Heart right ventricle (tissue), 16 donors: ENCODE measurements at regions of chr7 and their contacts with region 1.

Region 1: GRCh38 chr7:151315038-151315655 is 26.5 kb upstream of the NUB1 start:
- DNase-seq: peak in 1 of 2 donors; percentile 79
- ATAC-seq: peak in 7 of 8 donors; percentile 53 to 89 (median 78)
- H3K4me3 ChIP-seq: no peak overlapping the region
- H3K27ac ChIP-seq: no peak overlapping the region
- H3K4me1 ChIP-seq: peaks cover 0 to 12% (median 3%) of the 10 kb centered on the region in 9 donors
- H3K27me3 ChIP-seq: no peaks in the 10 kb centered on the region
- CTCF ChIP-seq: peak; percentile 62 to 92 (median 84)

Region 2: GRCh38 chr7:151125470-151125845 is 189.7 kb before region 1 on chr7:
- intact Hi-C with region 1: no loop called
- DNase-seq: peak; percentile 50 to 66
- ATAC-seq: peak; percentile 41 to 71 (median 60)
- H3K4me3 ChIP-seq: peak overlapping the region in 9 of 10 donors; percentile 23 to 65 (median 59)
- H3K27ac ChIP-seq: peak overlapping the region in 5 of 10 donors; percentile 38 to 58 (median 55)
- H3K4me1 ChIP-seq: peaks cover 3 to 28% (median 15%) of the 10 kb centered on the region in 9 donors
- H3K27me3 ChIP-seq: no peaks in the 10 kb centered on the region
- CTCF ChIP-seq: peak in 7 of 9 donors; percentile 4 to 52 (median 40)

Region 3: DNA sequence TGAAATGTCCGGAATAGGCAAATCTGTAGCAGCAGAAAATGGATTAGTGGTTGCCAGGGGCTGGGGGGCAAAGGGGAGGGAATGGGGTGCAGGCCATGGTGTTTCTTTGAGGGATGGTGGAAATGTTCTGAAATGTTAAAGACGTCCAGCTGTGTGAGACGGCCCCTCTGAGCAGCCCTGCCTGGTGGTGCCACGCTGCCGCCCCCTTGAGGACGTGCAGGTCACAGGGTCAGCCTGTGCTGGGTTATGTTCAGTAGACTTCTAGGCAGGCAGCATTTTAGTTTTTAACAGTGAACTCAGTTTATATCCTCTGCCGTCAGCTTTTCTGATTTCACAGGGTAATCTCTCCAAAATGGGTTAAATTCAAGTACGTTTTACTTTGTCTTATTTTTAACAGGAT is 35.9 kb after region 1 on chr7:
- intact Hi-C with region 1: loop called (anchors 1 to 5 kb)
- DNase-seq: no peak
- ATAC-seq: peak in 1 of 8 donors; percentile 35
- H3K4me3 ChIP-seq: no peak overlapping the region
- H3K27ac ChIP-seq: peak overlapping the region in 1 of 10 donors; percentile 90
- H3K4me1 ChIP-seq: peaks cover 0 to 44% (median 20%) of the 10 kb centered on the region in 9 donors
- H3K27me3 ChIP-seq: no peaks in the 10 kb centered on the region
- CTCF ChIP-seq: peak in 2 of 9 donors; percentile 8 to 31

Region 4: DNA sequence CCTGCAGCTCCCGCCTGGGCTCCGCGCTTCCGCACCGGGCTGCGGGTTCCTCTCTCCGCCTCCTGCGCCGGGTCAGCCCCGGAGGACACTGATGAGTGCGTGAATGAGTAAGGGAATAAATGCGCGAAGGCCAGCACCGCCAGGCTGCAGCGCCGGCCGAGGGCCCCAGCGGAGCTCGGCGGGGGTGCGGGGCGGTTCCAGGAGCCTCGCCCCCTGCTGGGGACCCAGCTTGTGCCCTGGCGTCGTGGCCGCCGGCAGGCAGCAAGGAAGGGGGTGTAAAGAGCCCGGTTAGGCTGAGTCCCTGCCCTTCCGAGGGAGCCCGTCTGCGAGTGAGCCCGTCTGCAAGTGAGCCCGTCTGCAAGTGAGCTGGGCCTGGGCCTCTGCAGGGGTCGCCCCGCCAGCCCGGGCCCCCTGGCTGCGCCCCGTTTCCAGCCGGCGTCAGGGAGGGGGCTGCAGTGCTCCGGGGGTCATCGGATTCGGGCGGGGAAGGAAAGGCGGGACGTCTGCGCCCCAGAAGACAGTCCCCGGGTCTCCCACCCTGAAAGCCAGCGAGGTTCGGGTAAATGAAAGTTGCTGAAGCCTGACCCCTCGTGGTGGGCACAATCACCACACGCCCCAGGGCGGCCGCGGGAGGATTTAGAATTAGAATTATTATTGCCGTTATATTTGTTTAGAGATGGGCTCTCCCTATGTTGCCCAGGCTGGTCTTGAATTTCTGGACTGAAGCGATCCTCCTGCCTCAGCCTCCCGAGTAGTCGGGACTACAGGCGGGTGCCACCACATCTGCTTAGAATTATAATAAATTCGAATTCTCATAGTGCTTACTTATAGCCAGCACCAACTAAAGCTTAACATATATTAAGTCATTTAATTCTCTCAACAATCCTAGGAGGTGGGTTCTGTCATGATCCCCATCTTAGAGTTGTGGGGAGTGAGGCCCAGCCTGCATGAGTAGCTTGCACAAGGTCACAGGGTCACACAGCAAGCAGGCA is 133.4 kb after region 1 on chr7:
- intact Hi-C with region 1: loop called in 6 of 10 experiments (anchors 2 to 5 kb)
- DNase-seq: peak; percentile 67 to 69
- ATAC-seq: peak; percentile 82 to 94 (median 90)
- H3K4me3 ChIP-seq: peak overlapping the region; percentile 43 to 73 (median 58)
- H3K27ac ChIP-seq: peak overlapping the region in 6 of 10 donors; percentile 7 to 61 (median 26)
- H3K4me1 ChIP-seq: peaks cover 0 to 13% (median 4%) of the 10 kb centered on the region in 9 donors
- H3K27me3 ChIP-seq: no peaks in the 10 kb centered on the region
- CTCF ChIP-seq: peak; percentile 69 to 88 (median 85)